Activated CD4-positive, alpha-beta memory T cell treated with anti-CD3 and anti-CD28 coated beads for 36 hours (primary cell): ENCODE measurements at regions of chr9 and their contacts with region 1.

Region 1: GRCh38 chr9:21455320-21455719 is 15.1 kb downstream of the IFNA1 start:
- DNase-seq: no peak
- H3K4me3 Mint-ChIP-seq: no peak overlapping the region
- H3K27ac Mint-ChIP-seq: no peak overlapping the region
- H3K4me1 Mint-ChIP-seq: no peaks in the 10 kb centered on the region
- H3K27me3 Mint-ChIP-seq: peaks cover 5% of the 10 kb centered on the region

Region 2: DNA sequence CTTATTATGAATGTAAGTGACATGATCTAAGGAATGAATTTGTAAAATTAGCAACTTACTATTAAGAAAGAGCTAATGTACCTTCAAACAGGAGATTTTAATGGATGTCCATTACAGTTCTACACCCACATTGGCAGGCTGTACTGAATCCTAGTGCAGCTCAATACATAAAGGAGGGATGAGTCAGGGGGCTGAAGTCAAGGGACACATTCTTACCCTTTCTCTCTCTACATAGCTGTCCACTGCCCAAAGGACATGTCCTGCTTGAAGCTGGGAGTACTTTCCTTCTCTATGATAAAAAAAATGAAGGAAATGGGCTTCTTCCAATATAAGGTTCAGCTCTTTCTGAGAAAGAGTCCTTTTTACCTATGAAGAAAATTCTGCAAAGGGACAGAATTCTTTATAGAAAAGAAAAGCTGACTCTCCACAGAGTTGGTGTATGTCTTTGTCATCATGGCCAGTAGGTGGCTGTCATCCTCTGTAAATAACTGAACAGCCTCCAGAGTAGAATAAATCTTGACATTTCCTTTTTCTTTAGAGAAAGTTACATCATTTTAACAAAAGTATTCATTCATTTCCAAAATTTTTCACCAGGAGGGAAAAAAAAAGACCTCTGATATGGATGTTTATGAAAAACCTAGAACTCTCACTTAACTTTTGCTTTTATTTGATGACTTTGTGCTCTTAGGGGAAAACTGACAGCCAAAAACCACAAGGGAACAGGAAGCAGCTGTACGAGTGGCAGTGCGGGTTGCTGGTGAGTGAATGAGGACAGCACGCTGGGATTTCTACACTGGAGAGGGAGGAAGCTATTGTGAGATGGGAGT is 202.4 kb before region 1 on chr9:
- CTCF ChIA-PET with region 1: interaction called, 17 read pairs
- POLR2A ChIA-PET with region 1: no interaction called
- intact Hi-C with region 1: no loop called
- DNase-seq: peak; percentile 31
- H3K4me3 Mint-ChIP-seq: no peak overlapping the region
- H3K27ac Mint-ChIP-seq: no peak overlapping the region
- H3K4me1 Mint-ChIP-seq: peaks cover 4% of the 10 kb centered on the region
- H3K27me3 Mint-ChIP-seq: peaks cover 10% of the 10 kb centered on the region

Region 3: GRCh38 chr9:21326526-21327139 is 128.7 kb before region 1 on chr9:
- CTCF ChIA-PET with region 1: interaction called, 30 read pairs
- POLR2A ChIA-PET with region 1: no interaction called
- intact Hi-C with region 1: no loop called
- DNase-seq: no peak
- H3K4me3 Mint-ChIP-seq: no peak overlapping the region
- H3K27ac Mint-ChIP-seq: no peak overlapping the region
- H3K4me1 Mint-ChIP-seq: peaks cover 43% of the 10 kb centered on the region
- H3K27me3 Mint-ChIP-seq: no peaks in the 10 kb centered on the region

Region 4: DNA sequence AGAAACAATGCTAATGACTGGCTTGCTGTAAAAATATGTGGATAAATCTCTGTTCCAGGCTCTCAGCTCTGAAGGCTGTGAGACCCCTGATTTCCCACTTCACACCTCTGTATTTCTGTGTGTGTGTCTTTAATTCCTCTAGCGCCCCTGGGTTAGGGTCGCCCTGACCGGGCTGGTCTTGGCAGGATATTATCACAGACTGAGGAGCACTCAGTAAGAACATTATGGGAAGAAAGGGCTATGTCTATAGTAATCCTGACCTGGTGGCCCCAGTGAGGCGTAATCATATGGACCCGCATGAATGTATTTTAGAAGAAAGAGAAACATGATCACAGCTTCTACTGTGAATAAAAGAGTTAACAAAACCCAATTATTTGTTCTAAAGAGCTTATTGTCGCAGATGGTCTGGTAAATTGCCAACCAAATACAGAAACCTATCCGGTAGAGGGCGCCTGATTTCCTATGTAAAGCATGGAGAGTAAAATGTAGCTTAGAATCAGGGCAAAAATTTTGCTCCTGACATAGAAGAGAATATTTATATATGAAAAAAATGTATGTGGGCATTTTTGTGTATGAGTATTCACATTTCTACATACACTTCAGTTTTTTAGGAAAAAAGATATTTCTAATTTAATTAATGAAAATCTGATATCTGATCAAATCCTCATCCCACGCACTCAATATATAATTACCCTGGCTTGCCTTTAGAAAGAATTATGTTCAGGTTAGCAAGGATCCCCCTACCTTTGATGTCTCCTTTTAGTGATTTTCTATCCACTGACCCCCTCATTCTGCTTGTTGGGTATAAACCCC is 20.9 kb before region 1 on chr9:
- CTCF ChIA-PET with region 1: interaction called, 21 read pairs
- POLR2A ChIA-PET with region 1: no interaction called
- intact Hi-C with region 1: loop called (anchors 1 kb)
- DNase-seq: peak; percentile 35
- H3K4me3 Mint-ChIP-seq: no peak overlapping the region
- H3K27ac Mint-ChIP-seq: no peak overlapping the region
- H3K4me1 Mint-ChIP-seq: no peaks in the 10 kb centered on the region
- H3K27me3 Mint-ChIP-seq: peaks cover 13% of the 10 kb centered on the region